Colonic mucosa (tissue), 4 donors: ENCODE measurements at regions of chr6 and their contacts with region 1.

Region 1: GRCh38 chr6:110815217-110816109 is at the start of gene CDK19:
- DNase-seq: peak; percentile 98
- H3K4me3 ChIP-seq: peak within 1 kb of the TSS; percentile 91
- H3K27ac ChIP-seq: peak within 1 kb of the TSS; percentile 85
- H3K4me1 ChIP-seq: peaks cover 9% of the 10 kb centered on the region
- H3K27me3 ChIP-seq: no peaks in the 10 kb centered on the region
- CTCF ChIP-seq: no peak
- total RNA-seq, gene CDK19: 20.2 to 36.5 TPM

Region 2: DNA sequence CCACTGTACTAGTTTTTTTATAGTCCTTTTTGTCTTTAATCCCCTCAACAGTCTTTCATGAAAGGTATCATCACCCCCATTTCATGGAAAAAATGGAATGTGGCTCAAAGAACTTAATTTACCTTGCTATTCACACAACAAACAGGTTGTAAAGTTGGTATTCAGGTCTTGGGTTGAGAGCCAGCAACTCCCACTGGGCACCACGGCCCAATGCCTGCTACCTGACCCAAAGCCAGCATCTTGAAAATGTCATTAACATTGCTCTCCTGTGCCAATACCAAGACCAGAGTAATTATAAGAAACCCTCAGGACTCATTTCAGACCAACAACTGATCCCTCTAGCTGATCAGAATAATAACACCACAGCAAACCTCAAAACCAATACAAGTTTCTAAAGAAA is 533.1 kb before region 1 on chr6:
- intact Hi-C with region 1: no loop called
- DNase-seq: no peak
- H3K4me3 ChIP-seq: no peak overlapping the region
- H3K27ac ChIP-seq: no peak overlapping the region
- H3K4me1 ChIP-seq: no peaks in the 10 kb centered on the region
- H3K27me3 ChIP-seq: no peaks in the 10 kb centered on the region
- CTCF ChIP-seq: no peak

Region 3: DNA sequence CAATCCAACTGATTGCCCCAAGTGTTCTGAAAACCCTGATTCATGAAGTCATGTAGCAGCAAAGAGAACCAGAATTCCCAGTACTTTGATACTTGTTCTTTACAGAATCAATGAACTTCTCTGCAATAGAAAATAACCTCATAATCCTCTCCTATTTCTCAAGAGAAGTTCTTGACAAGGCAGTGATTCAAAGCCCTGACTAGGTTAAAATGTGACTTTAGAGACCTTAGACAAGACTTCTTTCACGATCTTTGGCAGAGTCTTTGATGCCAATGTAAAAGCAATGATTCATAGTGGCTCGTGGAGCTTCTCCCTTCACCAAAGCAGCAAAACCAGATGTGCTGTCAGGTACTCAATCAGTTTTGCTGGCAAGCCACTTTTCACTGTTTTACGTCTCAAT is 95.4 kb before region 1 on chr6:
- intact Hi-C with region 1: no loop called
- DNase-seq: no peak
- H3K4me3 ChIP-seq: no peak overlapping the region
- H3K27ac ChIP-seq: no peak overlapping the region
- H3K4me1 ChIP-seq: no peaks in the 10 kb centered on the region
- H3K27me3 ChIP-seq: no peaks in the 10 kb centered on the region
- CTCF ChIP-seq: no peak

Region 4: DNA sequence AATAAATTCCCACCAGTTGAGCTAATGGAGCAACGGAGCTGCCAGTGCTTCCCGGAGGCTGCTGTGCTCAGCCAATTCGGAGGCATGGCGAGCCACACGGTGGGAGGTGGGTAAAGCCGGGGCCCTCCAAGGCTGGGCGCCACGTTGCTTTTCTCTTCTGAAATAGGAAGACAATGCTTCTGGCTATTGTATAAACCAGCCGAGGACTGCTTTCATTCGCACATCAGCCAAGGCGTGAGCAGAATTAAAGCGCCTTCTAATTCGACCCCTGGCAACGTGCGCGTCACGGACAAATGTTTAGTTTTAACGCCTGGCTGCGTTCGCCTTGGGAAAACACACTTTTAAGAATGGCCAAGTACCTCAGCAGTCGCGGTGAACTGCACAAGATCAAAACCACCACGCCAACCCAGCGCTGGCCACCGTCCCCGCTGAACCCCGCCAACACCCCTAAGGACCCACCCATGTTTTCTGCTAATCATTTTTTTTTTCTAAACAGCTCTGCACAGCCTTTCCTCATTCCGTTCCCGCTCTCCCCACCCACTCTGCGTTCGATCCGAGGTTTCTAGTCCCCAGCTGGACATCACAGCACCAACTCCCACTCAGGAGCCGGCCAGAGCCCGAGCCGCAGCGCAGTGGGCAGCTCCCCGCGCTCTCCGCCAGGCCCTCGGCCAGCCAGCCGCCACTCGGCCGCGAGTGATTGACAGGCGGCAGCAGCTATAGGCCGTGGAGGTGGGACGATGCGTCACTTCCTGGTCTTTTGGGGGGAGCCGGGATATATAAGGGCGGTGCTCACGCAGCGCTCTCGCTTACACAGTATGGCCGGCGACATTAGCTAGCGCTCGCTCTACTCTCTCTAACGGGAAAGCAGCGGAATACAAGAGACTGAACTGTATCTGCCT is 58.8 kb after region 1 on chr6 and contains the start of gene AMD1:
- intact Hi-C with region 1: loop called (anchors 5 kb)
- DNase-seq: peak; percentile 97
- H3K4me3 ChIP-seq: peak within 1 kb of the TSS; percentile 90
- H3K27ac ChIP-seq: peak within 1 kb of the TSS; percentile 92
- H3K4me1 ChIP-seq: peaks cover 11% of the 10 kb centered on the region
- H3K27me3 ChIP-seq: no peaks in the 10 kb centered on the region
- CTCF ChIP-seq: no peak
- total RNA-seq, gene AMD1: 70.4 to 72.7 TPM

Region 5: GRCh38 chr6:110900028-110900598 is 84.7 kb after region 1 on chr6:
- intact Hi-C with region 1: no loop called
- DNase-seq: no peak
- H3K4me3 ChIP-seq: no peak overlapping the region
- H3K27ac ChIP-seq: no peak overlapping the region
- H3K4me1 ChIP-seq: no peaks in the 10 kb centered on the region
- H3K27me3 ChIP-seq: no peaks in the 10 kb centered on the region
- CTCF ChIP-seq: no peak

Region 6: DNA sequence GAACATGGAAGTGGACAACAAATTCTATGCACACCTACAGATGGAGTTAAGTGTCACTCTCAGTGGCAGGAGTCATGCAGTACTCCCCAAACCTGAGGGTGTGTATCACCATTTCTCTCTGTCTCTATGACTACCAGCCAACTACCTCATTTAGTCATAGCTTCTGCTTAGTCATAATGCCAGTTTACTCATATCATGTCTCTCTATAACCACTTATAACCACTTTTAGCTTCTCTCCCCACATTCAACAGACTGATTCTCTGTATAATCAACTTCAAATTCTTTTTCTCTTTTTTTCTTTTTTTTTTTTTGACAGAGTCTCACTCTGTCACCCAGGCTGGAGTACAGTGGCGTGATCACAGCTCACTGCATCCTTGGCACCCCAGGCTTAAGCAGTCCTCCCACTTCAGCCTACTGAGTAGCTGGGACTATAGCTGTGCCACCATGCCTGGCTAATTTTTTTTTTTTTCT is 129.3 kb after region 1 on chr6:
- intact Hi-C with region 1: loop called (anchors 5 kb)
- DNase-seq: no peak
- H3K4me3 ChIP-seq: no peak overlapping the region
- H3K27ac ChIP-seq: no peak overlapping the region
- H3K4me1 ChIP-seq: no peaks in the 10 kb centered on the region
- H3K27me3 ChIP-seq: no peaks in the 10 kb centered on the region
- CTCF ChIP-seq: no peak